Keratinocyte (primary cell): ENCODE measurements at regions of chr15 and their contacts with region 1.

Region 1: DNA sequence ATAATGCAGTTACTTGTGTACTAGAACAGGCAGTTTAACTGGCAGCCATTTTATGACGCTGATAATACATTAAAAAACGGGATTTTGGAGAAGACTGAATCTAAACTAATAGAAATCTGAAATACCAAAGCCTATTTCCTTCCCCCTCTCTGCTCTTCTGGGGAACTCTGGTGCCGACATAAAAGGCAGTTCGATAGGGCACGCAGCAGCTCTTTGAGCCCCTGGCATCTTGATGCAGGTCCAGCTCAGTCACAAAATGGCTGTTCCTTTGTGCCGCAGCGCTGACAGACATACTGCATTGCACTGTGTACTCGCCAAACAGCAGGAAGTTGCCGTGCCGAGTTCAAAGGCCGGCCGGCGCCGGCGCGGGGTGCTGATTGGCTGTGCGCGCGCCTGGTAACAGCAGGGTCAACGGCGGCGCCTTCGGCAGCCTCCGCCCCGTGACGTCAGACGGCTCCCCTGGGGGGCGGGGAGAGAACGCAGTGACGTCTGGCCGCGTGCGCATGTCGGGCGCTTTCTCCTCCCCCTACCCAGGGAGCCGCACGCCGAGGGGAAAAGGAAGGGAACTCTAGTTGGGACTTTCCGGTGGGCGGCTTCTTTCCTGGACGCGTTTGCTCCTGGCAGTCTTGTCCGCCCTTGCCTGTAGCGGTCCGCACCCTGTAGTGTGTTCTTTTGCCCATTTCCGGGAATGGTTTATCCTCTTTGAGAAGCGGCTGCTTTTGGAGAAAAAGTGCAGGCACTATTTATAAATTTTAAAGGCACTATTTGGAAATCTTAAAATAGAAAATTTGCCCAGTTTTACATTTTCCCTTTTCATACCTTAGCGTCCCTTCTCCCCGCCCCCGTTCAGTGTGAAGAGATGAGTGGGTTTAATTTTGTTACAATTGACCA is 4.1 kb downstream of the CHD2 start:
- DNase-seq: peak; percentile 72
- H3K4me3 ChIP-seq: peak overlapping the region; percentile 61 to 96 (median 96)
- H3K27ac ChIP-seq: peak overlapping the region; percentile 100
- H3K4me1 ChIP-seq: peaks cover 37% of the 10 kb centered on the region
- H3K27me3 ChIP-seq: no peaks in the 10 kb centered on the region
- CTCF ChIP-seq: no peak

Region 2: DNA sequence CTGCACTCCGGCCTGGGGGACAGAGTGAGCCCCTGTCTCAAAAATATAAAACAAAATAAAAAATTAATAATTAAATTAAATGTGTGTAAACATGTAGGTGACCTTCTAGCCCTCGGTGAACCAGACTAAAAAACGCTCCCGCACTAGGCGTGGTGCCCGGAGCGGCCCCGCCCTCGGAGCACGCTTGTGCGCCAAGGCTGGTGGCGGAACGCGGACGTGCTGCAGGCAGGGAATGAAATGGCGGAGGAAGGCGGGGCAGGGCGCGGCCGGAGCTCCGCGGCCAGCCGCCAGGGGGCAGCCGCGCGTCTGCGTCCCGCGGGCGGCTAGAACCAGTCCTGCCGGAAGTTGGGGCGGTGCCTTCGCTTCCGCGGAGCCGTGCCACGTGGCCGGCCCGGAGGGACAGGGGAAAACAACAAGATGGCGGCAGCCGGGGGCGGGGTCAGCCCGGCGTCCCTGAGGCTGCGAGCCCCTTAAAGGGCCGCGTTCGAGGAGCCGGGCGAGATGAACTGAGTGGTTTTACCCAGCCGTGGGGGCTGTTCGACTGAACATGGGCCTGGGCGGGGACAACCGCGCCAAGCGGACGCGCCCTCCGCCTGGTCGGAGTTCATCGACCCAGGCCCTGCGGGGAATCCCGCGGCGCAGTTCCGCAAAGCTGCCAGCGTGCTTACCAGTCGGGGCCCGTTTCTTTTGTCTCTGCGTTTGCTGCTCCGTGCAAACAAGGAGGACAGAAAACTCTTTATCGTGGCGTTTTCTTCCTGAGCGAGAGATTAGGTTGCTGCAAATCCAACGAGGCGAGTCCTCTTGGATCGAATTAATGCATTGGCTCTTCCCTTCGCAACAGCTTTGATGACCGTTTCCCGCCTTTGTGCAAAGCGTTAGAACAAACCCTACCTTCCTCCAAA is 95.0 kb before region 1 on chr15:
- dilution Hi-C with region 1: loop called (anchors 25 kb)
- DNase-seq: no peak
- H3K4me3 ChIP-seq: peak overlapping the region; percentile 36 to 84 (median 81)
- H3K27ac ChIP-seq: peak overlapping the region; percentile 99
- H3K4me1 ChIP-seq: peaks cover 37% of the 10 kb centered on the region
- H3K27me3 ChIP-seq: no peaks in the 10 kb centered on the region
- CTCF ChIP-seq: peak; percentile 75 to 96 (median 80)

Region 3: DNA sequence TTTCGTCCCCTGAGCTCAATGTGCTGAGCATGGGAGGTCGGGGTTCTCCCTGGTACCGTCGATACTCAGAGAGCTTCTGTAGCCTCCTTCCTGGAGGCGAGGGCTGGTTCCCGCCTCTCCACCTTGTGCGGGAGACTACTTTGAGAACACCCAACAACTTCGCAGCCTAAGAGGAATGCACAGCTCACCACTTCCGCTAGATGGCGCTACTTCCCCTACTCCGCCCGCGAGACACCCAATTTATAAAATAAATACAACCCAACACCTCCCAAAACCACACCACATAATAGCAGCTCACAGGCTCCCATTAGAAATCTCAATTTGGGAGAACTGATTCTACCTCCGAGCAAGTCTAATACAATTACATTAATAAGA is 183.6 kb after region 1 on chr15:
- dilution Hi-C with region 1: no loop called
- DNase-seq: peak; percentile 35
- H3K4me3 ChIP-seq: peak overlapping the region; percentile 27 to 61 (median 49)
- H3K27ac ChIP-seq: no peak overlapping the region
- H3K4me1 ChIP-seq: no peaks in the 10 kb centered on the region
- H3K27me3 ChIP-seq: peaks cover 55% of the 10 kb centered on the region
- CTCF ChIP-seq: peak; percentile 79 to 95 (median 91)